ENCODE measurements at regions of chr17 and their contacts with region 1.

Region 1: GRCh38 chr17:80082403-80083135 is 18.8 kb upstream of the GAA start:
- DNase-seq: peak; percentile 30 to 69 (median 56)
- ATAC-seq: peak; percentile 71
- H3K4me3 ChIP-seq: no peak overlapping the region
- H3K4me3 Mint-ChIP-seq: no peak overlapping the region
- H3K27ac ChIP-seq: no peak overlapping the region
- H3K27ac Mint-ChIP-seq: no peak overlapping the region
- H3K4me1 ChIP-seq: peaks cover 0 to 5% of the 10 kb centered on the region in 2 donors
- H3K4me1 Mint-ChIP-seq: peaks cover 0 to 4% (median 2%) of the 10 kb centered on the region in 7 donors
- H3K27me3 ChIP-seq: no peaks in the 10 kb centered on the region
- H3K27me3 Mint-ChIP-seq: peaks cover 0 to 4% (median 0%) of the 10 kb centered on the region in 5 donors

Region 2: GRCh38 chr17:80008383-80008840 is 74.2 kb before region 1 on chr17:
- CTCF ChIA-PET with region 1: interaction called, 4 read pairs
- POLR2A ChIA-PET with region 1: no interaction called
- intact Hi-C with region 1: loop called in 1 of 2 experiments (anchors 2 kb)
- DNase-seq: peak; percentile 30 to 82 (median 63)
- ATAC-seq: peak; percentile 89
- H3K4me3 ChIP-seq: no peak overlapping the region
- H3K4me3 Mint-ChIP-seq: no peak overlapping the region
- H3K27ac ChIP-seq: no peak overlapping the region
- H3K27ac Mint-ChIP-seq: peak overlapping the region in 1 of 9 donors; percentile 20
- H3K4me1 ChIP-seq: peaks cover 0 to 3% of the 10 kb centered on the region in 2 donors
- H3K4me1 Mint-ChIP-seq: peaks cover 5 to 13% (median 8%) of the 10 kb centered on the region in 7 donors
- H3K27me3 ChIP-seq: no peaks in the 10 kb centered on the region
- H3K27me3 Mint-ChIP-seq: no peaks in the 10 kb centered on the region

Region 3: DNA sequence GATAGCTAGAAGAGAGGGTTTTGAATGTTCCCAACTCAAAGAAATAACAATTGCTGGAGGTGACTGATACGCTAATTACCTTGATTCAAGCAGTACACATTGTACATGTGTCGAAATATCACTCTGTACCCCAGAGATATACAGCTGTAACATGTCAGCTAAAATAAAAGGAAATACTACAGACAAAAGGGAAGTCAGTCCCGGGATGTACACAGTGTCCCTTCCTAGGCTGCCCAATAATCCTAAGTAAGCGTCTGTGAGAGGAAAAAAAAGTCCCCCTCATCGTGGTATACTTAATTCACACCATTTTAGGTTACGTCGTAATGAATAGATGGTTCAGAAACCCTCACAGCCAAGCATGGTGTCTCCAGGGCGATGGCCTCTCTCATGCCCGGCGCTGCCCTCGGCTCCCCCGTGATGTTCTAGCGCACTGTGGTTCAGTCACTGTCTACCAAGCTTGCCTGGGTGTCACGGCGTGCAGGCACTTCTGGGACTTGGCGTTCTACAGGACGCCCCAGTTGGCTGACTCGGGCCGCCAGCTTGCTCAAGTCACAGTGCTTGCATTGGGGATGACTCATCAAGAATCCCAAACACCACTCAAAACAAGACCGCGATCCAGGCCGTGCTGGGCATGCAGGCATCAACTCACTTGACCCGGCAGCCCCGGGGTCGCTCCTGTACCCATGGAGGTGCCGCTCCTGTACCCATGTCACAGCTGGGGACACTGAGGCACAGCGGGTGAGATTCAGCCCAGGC is 18.6 kb before region 1 on chr17:
- CTCF ChIA-PET with region 1: no interaction called
- POLR2A ChIA-PET with region 1: no interaction called
- intact Hi-C with region 1: no loop called
- DNase-seq: no peak
- ATAC-seq: peak; percentile 48
- H3K4me3 ChIP-seq: no peak overlapping the region
- H3K4me3 Mint-ChIP-seq: no peak overlapping the region
- H3K27ac ChIP-seq: no peak overlapping the region
- H3K27ac Mint-ChIP-seq: peak overlapping the region in 1 of 9 donors; percentile 81
- H3K4me1 ChIP-seq: no peaks in the 10 kb centered on the region
- H3K4me1 Mint-ChIP-seq: peaks cover 0 to 3% (median 0%) of the 10 kb centered on the region in 7 donors
- H3K27me3 ChIP-seq: no peaks in the 10 kb centered on the region
- H3K27me3 Mint-ChIP-seq: peaks cover 0 to 2% (median 0%) of the 10 kb centered on the region in 5 donors

Region 4: GRCh38 chr17:80374732-80375585 is 292.4 kb after region 1 on chr17:
- CTCF ChIA-PET with region 1: no interaction called
- POLR2A ChIA-PET with region 1: no interaction called
- intact Hi-C with region 1: no loop called
- DNase-seq: no peak
- ATAC-seq: no peak
- H3K4me3 ChIP-seq: no peak overlapping the region
- H3K4me3 Mint-ChIP-seq: no peak overlapping the region
- H3K27ac ChIP-seq: no peak overlapping the region
- H3K27ac Mint-ChIP-seq: peak overlapping the region in 4 of 9 donors; percentile 9 to 79 (median 36)
- H3K4me1 ChIP-seq: no peaks in the 10 kb centered on the region
- H3K4me1 Mint-ChIP-seq: peaks cover 0 to 3% (median 0%) of the 10 kb centered on the region in 7 donors
- H3K27me3 ChIP-seq: no peaks in the 10 kb centered on the region
- H3K27me3 Mint-ChIP-seq: no peaks in the 10 kb centered on the region